HEK293T (cell line): ENCODE measurements at regions of chr2 and their contacts with region 1.

Region 1: DNA sequence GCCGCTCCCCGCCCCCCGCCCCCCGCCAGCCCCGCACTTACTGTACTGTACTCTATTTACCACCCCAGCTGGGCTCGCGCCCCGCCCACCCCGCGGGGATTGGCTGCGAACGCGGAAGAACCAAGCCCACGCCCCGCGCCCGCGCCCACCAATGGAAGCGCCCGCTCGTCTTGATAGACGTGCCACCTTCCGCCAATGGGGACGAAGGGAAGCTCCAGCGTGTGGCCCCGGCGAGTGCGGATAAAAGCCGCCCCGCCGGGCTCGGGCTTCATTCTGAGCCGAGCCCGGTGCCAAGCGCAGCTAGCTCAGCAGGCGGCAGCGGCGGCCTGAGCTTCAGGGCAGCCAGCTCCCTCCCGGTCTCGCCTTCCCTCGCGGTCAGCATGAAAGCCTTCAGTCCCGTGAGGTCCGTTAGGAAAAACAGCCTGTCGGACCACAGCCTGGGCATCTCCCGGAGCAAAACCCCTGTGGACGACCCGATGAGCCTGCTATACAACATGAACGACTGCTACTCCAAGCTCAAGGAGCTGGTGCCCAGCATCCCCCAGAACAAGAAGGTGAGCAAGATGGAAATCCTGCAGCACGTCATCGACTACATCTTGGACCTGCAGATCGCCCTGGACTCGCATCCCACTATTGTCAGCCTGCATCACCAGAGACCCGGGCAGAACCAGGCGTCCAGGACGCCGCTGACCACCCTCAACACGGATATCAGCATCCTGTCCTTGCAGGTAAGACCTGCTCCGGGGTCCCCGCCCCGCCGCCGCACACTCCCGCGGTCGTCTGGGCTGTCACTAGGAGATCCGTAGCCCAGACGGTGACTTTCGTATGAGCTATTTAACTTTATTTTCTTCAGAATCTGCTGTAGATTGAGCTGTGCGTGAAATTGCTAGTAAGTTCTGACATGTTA is at the start of gene ID2:
- DNase-seq: peak; percentile 93

Region 2: DNA sequence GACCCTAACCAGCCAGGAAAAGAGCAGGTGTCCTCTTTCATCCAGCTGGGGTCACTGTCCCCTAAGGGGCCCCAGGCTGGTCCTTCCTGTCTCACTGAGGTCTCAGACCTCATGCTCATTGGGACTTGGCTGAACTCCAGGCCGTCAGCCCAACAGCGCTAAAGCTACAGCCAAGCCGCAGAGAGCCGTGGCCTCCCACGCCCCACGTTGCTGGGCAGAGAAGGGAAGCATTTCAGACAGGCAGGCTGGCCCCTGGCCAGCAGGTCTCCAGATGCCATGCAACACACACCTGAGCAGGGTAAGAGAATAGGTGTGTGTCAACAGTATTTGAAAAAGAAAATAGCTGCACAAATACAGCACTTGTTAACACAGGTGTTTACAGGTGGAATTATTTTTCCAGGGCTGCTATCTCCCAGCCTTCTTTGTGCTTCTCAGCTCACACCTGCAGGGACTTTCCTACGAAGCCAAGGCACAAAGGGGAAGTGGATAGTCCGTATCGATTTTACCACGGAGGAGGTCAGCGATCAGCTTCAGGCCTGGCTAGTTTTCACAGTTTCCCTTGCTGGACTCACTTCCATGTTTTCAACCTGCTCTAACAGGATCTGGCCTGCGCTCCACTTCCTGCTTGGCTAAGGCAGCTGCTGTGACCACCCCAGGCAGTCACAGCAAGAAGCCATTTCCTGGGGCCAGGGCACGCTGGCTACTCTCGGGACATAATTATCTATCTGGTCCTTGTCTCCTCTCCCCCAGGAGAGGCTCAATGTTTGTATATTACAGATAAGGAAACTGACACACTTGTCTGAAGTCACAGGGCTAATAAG is 156.2 kb before region 1 on chr2:
- CTCF ChIA-PET with region 1: no interaction called
- POLR2A ChIA-PET with region 1: interaction called, 11 read pairs
- DNase-seq: peak; percentile 26

Region 3: GRCh38 chr2:8536678-8537561 is 145.1 kb before region 1 on chr2:
- CTCF ChIA-PET with region 1: no interaction called
- POLR2A ChIA-PET with region 1: interaction called, 11 read pairs
- DNase-seq: no peak

Region 4: DNA sequence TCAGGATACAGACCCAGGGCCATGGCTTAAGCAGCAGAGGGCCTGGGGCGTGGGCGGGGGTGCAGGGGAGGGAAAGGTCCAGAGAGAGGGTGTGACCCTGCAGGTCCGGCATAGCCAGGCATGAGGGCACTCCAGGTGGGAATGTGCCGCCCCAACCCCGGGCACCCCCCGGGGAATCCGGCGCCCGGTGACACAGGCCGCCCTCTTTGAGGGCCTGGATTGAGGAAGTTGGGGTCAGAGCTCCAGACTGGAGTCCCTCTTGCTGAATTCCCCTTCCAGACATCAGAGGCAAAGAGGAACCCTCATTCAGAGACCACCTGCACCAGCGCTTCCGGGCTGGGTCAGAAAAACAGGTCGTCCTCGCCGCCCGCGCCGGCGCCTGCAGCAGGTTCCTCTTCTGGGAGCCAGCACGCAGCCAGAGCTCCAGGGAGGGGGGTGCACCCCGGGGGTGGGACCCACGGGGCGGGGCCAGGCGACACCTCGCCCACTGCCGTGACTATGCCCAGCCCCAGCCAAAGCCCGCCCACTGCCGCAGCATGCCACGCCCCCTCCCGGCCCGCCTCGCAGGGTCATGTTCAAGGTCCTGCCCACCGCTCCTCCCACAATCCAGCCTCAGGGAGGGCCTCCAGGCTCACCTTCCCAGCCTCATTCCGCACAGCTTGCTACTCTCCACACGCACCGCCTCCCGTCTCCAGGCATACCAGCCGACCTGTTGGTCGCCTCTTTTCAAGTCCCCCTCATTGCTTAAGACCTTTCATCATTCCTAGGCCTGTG is 98.5 kb before region 1 on chr2:
- CTCF ChIA-PET with region 1: no interaction called
- POLR2A ChIA-PET with region 1: interaction called, 14 read pairs
- DNase-seq: peak; percentile 80

Region 5: DNA sequence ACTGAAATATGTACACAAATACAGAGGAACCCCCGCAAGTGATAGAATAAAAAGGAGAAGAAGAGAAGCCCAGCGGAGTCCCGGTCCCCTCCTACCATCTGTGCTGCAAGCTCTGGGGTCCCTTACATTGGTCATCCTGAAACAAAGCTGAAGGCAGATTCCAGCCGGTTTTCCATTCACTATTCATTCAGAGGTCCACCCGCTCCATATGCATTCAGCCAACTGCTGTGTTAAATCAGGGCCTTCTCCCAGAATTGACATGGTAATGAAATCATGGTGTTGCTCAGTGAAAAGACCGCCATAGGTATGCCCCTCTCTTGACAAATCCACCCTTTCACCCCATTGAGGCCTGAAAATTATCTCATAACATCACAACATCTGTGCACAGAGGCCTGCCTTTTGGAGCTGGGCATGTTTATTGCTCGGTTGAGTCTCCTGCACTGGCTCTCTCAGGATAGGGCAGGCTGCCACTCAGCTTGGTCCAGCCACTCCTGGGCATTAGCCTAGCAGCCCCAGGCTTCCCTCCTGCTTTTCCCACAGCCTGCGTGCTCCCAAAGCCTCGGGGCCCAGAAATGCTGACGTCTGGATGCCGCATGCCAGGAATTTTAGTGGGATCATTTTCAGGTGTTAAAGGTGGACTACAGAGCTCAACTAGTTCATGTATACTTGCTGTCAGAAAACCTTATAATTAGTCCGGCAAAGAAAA is 39.5 kb before region 1 on chr2:
- CTCF ChIA-PET with region 1: no interaction called
- POLR2A ChIA-PET with region 1: interaction called, 10 read pairs
- DNase-seq: no peak

Region 6: GRCh38 chr2:8693155-8693821 is 11.2 kb after region 1 on chr2:
- CTCF ChIA-PET with region 1: interaction called, 6 read pairs
- POLR2A ChIA-PET with region 1: interaction called, 11 read pairs
- DNase-seq: peak; percentile 72

Region 7: DNA sequence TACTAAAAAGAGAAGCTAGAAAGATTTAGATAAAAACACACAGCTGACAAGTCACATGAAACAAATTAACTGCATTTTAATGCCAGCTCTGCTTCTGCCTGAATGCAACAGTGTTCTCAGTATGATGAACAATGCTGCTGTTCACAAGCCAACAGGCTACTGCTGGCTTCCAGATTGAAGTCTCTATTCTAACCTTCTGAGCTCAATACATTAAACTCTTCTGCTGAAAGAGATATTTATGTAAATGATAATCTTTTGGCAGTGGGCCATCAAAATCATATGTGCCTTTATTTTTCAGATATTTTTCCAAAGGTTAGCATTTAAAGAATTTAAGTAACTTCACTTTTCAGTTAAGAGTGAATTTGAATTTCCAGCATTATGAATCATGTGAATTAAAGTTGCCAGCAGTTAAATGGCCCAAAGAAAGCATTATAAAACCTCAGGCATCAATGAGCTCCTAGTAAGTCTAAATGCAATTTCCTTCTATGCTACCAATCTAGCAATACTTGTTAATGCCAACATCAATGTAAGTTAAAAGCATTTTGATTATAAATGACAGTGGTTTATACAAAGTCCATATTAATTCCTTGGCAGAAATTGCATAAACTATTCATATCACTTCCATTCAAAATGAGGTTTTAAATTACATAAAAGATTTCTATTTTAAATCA is 72.2 kb after region 1 on chr2:
- CTCF ChIA-PET with region 1: no interaction called
- POLR2A ChIA-PET with region 1: no interaction called
- DNase-seq: no peak